Endothelial cell of umbilical vein (primary cell): ENCODE measurements at regions of chr17 and their contacts with region 1.

Region 1: DNA sequence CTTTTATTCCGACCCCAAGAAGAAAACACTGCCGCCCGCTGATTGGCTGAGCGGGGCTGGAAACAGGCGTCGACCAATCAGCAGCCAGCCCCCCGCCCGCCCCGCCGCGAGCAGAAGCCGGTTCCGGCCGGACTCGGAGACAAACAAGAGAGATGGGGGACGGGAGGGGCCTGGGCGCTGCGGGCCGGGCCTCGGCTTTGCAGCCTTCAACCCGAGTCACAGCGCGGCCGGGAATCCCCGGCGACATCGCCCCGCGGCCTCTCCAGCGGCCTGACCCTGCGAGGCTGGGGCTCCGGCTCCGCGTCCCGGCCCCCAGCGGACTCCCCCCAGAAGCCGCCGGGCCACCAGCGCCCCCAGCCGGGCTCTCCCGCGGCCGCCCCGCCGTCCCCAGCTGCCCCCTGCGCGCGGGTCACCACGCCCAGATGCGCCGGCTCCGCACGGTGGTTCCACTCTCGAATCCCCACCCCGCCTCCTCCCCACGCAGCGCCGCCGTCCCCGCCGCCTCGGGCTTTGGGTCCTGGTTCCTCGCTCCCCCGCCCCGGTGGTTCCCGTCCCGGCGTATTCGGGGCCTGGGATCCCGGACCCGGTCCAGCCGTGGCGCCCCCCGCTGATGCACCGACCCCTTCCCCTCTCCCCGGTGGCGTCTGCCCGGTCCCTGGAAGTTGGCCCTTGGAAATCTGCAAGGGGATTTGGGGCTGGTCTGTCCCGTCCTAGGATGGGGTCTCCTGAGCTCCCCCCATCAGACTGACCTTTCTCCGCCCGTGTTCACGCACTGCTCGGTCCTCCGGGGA is 417 bp upstream of the SLC43A2 start:
- DNase-seq: peak; percentile 94
- H3K4me3 ChIP-seq: peak overlapping the region; percentile 35 to 87 (median 53)
- H3K27ac ChIP-seq: peak overlapping the region; percentile 53
- H3K4me1 ChIP-seq: peaks cover 35% of the 10 kb centered on the region
- H3K27me3 ChIP-seq: no peaks in the 10 kb centered on the region
- CTCF ChIP-seq: peak in 1 of 2 donors; percentile 34
- POLR2A ChIP-seq: peak; percentile 37

Region 2: DNA sequence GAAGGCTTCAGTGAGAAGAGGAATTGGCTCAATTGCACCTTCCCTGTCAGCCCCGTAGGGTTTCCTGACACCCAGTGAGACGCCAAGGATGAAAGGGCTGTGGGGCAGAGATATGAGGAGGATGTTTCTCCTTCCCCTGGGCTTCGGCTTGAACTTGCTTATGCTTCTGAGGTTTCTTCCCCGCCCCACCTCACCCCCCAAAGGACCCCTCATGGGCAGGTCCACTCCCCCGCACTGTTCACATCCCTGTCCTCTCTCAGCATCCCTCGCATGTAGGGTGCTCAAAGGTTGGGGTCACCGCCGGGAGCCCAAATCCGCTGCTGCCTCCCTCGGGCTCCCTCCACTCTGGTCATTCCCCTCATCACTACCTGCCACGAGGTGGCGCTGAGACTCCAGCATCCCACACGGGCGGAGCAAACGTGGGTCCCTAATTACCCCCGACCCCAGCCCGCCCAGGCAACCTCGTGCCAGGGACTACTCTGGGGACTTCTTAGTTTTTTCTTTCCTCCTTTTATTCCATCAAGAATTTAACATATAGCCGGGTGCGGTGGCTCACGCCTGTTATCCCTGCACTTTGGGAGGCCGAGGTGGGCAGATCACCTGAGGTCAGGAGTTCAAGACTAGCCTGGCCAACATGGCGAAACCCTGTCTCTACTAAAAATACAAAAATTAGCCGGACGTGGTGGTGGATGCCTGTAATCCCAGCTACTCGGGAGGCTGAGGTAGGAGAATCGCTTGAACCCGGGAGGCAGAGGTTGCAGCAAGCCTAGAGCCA is 352.9 kb before region 1 on chr17:
- CTCF ChIA-PET with region 1: interaction called, 3 read pairs
- POLR2A ChIA-PET with region 1: interaction called, 4 read pairs
- dilution Hi-C with region 1: no loop called
- intact Hi-C with region 1: loop called (anchors 5 kb)
- DNase-seq: peak; percentile 30
- H3K4me3 ChIP-seq: no peak overlapping the region
- H3K27ac ChIP-seq: no peak overlapping the region
- H3K4me1 ChIP-seq: no peaks in the 10 kb centered on the region
- H3K27me3 ChIP-seq: peaks cover 8 to 11% of the 10 kb centered on the region in 2 experiments
- CTCF ChIP-seq: peak; percentile 50 to 90
- POLR2A ChIP-seq: no peak

Region 3: DNA sequence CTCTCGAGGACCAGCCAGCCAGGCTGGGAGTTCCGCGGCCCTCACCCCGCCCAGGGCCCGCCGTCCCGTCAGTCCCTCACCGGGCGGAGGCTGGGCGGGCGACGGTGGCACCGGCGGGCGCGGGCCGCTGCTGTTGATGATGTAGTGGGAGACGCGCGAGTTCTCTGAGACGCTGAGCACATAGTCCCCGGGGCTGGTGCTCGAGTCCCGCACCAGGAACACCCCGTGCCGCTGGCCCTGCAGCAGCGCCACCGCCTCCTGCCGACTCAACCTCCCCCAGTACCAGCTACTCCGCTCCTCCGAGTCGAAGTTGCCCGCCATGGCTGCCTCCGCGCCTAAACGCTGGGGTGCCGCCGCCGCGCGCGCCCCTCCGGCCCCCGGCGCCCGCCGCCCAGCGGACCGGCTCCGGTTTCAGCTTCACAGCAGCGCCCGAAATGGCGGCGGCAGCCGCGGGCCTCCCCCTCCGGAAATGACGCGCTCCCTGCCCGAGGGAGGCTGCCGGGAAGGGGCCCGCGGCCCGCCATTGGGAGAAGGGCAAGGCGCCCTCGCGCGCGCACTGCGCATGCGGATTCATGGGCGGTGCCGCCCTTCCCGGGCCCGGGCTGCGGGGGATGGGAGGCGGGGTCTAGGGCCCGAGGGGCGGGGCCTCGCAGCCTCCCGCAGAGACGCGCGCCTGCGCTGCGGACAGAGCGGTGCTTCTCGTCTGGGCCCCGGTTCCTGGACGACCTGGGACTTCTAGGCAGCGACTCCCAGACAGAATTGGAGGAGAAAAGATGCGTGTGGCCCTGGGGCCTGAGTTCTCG is 173.1 kb before region 1 on chr17 and contains the start of gene CRK:
- CTCF ChIA-PET with region 1: no interaction called
- POLR2A ChIA-PET with region 1: no interaction called
- dilution Hi-C with region 1: no loop called
- intact Hi-C with region 1: no loop called
- DNase-seq: peak; percentile 97
- H3K4me3 ChIP-seq: peak within 1 kb of the TSS; percentile 83 to 95 (median 89)
- H3K27ac ChIP-seq: peak within 1 kb of the TSS; percentile 91
- H3K4me1 ChIP-seq: peaks cover 18% of the 10 kb centered on the region
- H3K27me3 ChIP-seq: no peaks in the 10 kb centered on the region
- CTCF ChIP-seq: no peak
- POLR2A ChIP-seq: peak; percentile 98
- total RNA-seq, gene CRK: 67.2 and 71.3 TPM in 2 replicates

Region 4: GRCh38 chr17:1561400-1562175 is 67.5 kb before region 1 on chr17:
- CTCF ChIA-PET with region 1: interaction called, 12 read pairs
- POLR2A ChIA-PET with region 1: no interaction called
- dilution Hi-C with region 1: no loop called
- intact Hi-C with region 1: no loop called
- DNase-seq: peak; percentile 24
- H3K4me3 ChIP-seq: peak overlapping the region; percentile 45 to 83 (median 69)
- H3K27ac ChIP-seq: peak overlapping the region; percentile 46
- H3K4me1 ChIP-seq: peaks cover 38% of the 10 kb centered on the region
- H3K27me3 ChIP-seq: no peaks in the 10 kb centered on the region
- CTCF ChIP-seq: peak; percentile 15 to 40
- POLR2A ChIP-seq: no peak

Region 5: GRCh38 chr17:1573916-1574696 is 54.9 kb before region 1 on chr17:
- CTCF ChIA-PET with region 1: interaction called, 459 read pairs
- POLR2A ChIA-PET with region 1: interaction called, 7 read pairs
- dilution Hi-C with region 1: no loop called
- intact Hi-C with region 1: loop called (anchors 1 kb)
- DNase-seq: peak; percentile 76
- H3K4me3 ChIP-seq: no peak overlapping the region
- H3K27ac ChIP-seq: no peak overlapping the region
- H3K4me1 ChIP-seq: peaks cover 21% of the 10 kb centered on the region
- H3K27me3 ChIP-seq: no peaks in the 10 kb centered on the region
- CTCF ChIP-seq: peak; percentile 96 to 99
- POLR2A ChIP-seq: no peak

Region 6: GRCh38 chr17:1611715-1612114 is 17.3 kb before region 1 on chr17:
- CTCF ChIA-PET with region 1: interaction called, 7 read pairs
- POLR2A ChIA-PET with region 1: no interaction called
- dilution Hi-C with region 1: no loop called
- intact Hi-C with region 1: loop called (anchors 2 kb)
- DNase-seq: no peak
- H3K4me3 ChIP-seq: no peak overlapping the region
- H3K27ac ChIP-seq: no peak overlapping the region
- H3K4me1 ChIP-seq: peaks cover 11% of the 10 kb centered on the region
- H3K27me3 ChIP-seq: no peaks in the 10 kb centered on the region
- CTCF ChIP-seq: no peak
- POLR2A ChIP-seq: no peak

Region 7: DNA sequence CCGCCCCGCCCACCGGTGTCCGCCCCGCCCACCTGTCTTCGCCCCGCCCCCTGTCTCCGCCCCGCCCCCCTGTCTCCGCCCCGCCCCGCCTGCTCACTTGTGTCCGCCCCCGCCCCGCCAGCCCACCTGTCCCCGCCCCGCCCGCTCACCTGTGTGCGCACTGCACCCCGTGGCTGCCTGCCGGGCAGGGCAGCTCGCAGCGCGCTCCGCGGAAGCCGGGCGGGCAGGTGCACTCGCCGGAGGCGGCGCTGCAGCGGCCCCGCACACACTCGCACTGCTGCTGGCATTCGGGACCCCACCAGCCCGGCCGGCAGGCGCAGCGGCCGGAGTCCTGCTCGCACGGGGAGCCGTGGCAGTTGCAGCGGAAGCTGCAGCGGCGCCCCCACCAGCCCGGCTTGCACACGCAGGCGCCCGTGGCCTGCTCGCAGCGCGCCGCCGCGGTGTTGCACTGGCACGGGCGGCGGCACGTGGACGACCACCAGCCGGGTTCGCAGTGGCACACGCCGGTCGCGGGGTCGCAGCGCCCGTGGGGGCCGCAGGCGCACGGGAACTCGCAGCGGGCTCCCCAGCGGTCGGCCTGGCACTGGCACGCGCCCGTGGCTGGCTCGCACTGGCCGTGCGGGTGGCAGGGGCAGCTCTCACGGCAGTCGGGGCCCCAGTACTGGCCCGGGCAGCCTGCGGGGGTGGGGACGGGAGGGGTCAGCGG is 14.4 kb after region 1 on chr17:
- CTCF ChIA-PET with region 1: interaction called, 26 read pairs
- POLR2A ChIA-PET with region 1: interaction called, 4 read pairs
- dilution Hi-C with region 1: no loop called
- intact Hi-C with region 1: loop called (anchors 1 kb)
- DNase-seq: no peak
- H3K4me3 ChIP-seq: peak overlapping the region in 1 of 3 experiments; percentile 78
- H3K27ac ChIP-seq: peak overlapping the region; percentile 72
- H3K4me1 ChIP-seq: peaks cover 35% of the 10 kb centered on the region
- H3K27me3 ChIP-seq: no peaks in the 10 kb centered on the region
- CTCF ChIP-seq: peak; percentile 16 to 29
- POLR2A ChIP-seq: no peak